ENCODE measurements at regions of chr20 and their contacts with region 1.

Region 1: DNA sequence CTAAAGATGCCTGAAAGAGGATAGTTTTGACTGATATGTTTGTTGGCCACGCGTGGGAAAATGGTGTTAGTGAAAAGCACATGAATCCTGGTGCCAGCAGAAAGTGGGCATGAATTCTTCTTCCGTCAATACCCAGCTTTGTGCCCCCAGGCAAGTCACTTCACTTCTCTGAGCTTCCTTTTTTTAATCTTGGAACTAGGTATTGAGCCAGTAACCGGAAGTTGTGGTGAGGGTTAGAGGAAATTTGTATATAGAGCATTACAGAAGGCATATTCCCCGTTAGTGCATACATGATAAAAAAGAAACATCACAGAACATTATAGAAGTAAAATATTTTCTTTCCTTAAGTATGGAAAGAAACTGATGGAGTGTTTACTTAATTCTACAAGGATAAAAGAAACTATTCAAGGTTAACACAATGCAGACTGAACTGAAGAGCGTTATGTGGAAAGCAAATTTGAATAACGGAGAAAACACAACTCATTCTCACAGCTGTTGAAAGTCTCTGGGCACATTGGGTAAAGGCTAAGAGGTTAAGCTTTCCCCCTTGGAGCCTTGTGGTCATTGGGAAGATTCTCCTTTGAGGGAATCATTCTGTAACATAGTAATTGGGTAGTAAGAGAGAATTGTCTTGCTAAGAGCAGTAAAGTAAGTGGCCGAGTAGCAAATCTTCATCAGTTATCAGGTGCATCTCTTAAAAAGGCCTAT is 223.1 kb downstream of the BCAS1 start:
- DNase-seq: peak; percentile 66 to 87 (median 85)
- H3K4me3 ChIP-seq: peak overlapping the region; percentile 9 to 63 (median 37)
- H3K4me3 Mint-ChIP-seq: peak overlapping the region; percentile 44 to 89
- H3K27ac ChIP-seq: peak overlapping the region; percentile 13 to 90
- H3K27ac Mint-ChIP-seq: peak overlapping the region; percentile 87 to 95 (median 92)
- H3K4me1 ChIP-seq: peaks cover 45 to 72% of the 10 kb centered on the region in 2 donors
- H3K4me1 Mint-ChIP-seq: peaks cover 61% of the 10 kb centered on the region
- H3K27me3 ChIP-seq: no peaks in the 10 kb centered on the region
- H3K27me3 Mint-ChIP-seq: peaks cover 0 to 3% (median 0%) of the 10 kb centered on the region in 3 donors
- CTCF ChIP-seq: no peak

Region 2: DNA sequence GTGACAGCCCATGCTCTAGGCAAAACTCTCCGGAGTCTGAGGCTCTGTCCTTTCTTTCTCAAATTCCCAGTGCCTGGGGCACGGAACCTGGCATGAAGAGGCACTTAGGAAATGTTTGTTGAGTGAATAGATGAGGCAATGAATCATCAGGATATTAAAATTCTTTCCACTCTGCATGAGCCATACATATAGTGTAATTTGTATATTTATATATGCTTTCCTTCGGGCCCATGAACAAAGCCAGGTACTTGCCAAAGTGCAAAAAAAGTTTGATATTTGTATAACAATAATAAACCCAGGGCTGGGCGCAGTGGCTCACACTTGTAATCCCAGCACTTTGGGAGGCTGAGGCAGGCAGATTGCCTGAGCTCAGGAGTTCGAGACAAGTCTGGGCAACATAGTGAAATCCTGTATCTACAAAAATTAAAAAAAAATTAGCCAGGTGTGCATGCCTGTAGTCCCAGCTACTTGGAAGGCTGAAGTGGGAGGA is 41.3 kb before region 1 on chr20:
- intact Hi-C with region 1: no loop called
- DNase-seq: no peak
- H3K4me3 ChIP-seq: no peak overlapping the region
- H3K4me3 Mint-ChIP-seq: no peak overlapping the region
- H3K27ac ChIP-seq: no peak overlapping the region
- H3K27ac Mint-ChIP-seq: no peak overlapping the region
- H3K4me1 ChIP-seq: no peaks in the 10 kb centered on the region
- H3K4me1 Mint-ChIP-seq: peaks cover 4% of the 10 kb centered on the region
- H3K27me3 ChIP-seq: no peaks in the 10 kb centered on the region
- H3K27me3 Mint-ChIP-seq: no peaks in the 10 kb centered on the region
- CTCF ChIP-seq: no peak

Region 3: DNA sequence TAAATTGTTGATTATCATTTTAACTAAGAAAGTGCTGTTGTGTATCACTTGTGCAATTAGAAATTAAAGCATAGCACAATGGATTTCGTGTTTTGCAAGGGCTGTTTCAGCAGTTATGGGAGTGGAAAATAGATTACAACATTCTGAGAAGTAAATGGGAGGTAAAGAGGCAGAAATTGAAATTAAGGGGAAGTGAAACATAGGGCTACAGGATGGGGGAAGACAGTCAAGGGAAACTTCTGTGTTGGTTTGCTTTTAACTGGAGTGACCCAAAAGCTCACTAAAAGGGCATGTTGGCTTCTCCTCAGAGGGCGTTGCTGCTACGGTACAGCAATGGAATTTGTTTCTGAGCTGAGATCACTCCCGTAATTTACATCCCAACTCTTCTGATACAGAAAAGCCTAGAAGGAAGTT is 75.6 kb after region 1 on chr20:
- intact Hi-C with region 1: loop called in 1 of 2 experiments (anchors 5 kb)
- DNase-seq: peak; percentile 85 to 93 (median 90)
- H3K4me3 ChIP-seq: peak overlapping the region in 1 of 3 experiments; percentile 51
- H3K4me3 Mint-ChIP-seq: no peak overlapping the region
- H3K27ac ChIP-seq: peak overlapping the region; percentile 79 to 92
- H3K27ac Mint-ChIP-seq: peak overlapping the region; percentile 87 to 97 (median 95)
- H3K4me1 ChIP-seq: peaks cover 66 to 77% of the 10 kb centered on the region in 2 donors
- H3K4me1 Mint-ChIP-seq: peaks cover 63% of the 10 kb centered on the region
- H3K27me3 ChIP-seq: no peaks in the 10 kb centered on the region
- H3K27me3 Mint-ChIP-seq: peaks cover 0 to 2% (median 0%) of the 10 kb centered on the region in 3 donors
- CTCF ChIP-seq: no peak